ENCODE measurements at regions of chr11 and their contacts with region 1.

Region 1: GRCh38 chr11:67345920-67346799 is 7.2 kb downstream of the POLD4 start:
- DNase-seq: peak in 5 of 9 donors; percentile 34 to 62 (median 52)
- ATAC-seq: peak; percentile 76
- H3K4me3 ChIP-seq: no peak overlapping the region
- H3K4me3 Mint-ChIP-seq: peak overlapping the region; percentile 30 to 74 (median 56)
- H3K27ac ChIP-seq: peak overlapping the region; percentile 68
- H3K27ac Mint-ChIP-seq: peak overlapping the region; percentile 61 to 98 (median 92)
- H3K4me1 ChIP-seq: peaks cover 5 to 38% of the 10 kb centered on the region in 2 donors
- H3K4me1 Mint-ChIP-seq: peaks cover 27 to 70% (median 60%) of the 10 kb centered on the region in 7 donors
- H3K27me3 ChIP-seq: no peaks in the 10 kb centered on the region
- H3K27me3 Mint-ChIP-seq: no peaks in the 10 kb centered on the region

Region 2: GRCh38 chr11:67373925-67374618 is 27.9 kb after region 1 on chr11:
- CTCF ChIA-PET with region 1: interaction called, 495 read pairs
- POLR2A ChIA-PET with region 1: interaction called, 272 read pairs
- intact Hi-C with region 1: no loop called
- DNase-seq: peak in 6 of 9 donors; percentile 45 to 56 (median 50)
- ATAC-seq: peak; percentile 68
- H3K4me3 ChIP-seq: peak overlapping the region; percentile 64
- H3K4me3 Mint-ChIP-seq: peak overlapping the region; percentile 74 to 98 (median 86)
- H3K27ac ChIP-seq: peak overlapping the region; percentile 57
- H3K27ac Mint-ChIP-seq: peak overlapping the region in 7 of 9 donors; percentile 55 to 83 (median 69)
- H3K4me1 ChIP-seq: peaks cover 12 to 31% of the 10 kb centered on the region in 2 donors
- H3K4me1 Mint-ChIP-seq: peaks cover 18 to 41% (median 27%) of the 10 kb centered on the region in 7 donors
- H3K27me3 ChIP-seq: peaks cover 0 to 5% of the 10 kb centered on the region in 2 donors
- H3K27me3 Mint-ChIP-seq: peaks cover 0 to 60% (median 14%) of the 10 kb centered on the region in 5 donors

Region 3: DNA sequence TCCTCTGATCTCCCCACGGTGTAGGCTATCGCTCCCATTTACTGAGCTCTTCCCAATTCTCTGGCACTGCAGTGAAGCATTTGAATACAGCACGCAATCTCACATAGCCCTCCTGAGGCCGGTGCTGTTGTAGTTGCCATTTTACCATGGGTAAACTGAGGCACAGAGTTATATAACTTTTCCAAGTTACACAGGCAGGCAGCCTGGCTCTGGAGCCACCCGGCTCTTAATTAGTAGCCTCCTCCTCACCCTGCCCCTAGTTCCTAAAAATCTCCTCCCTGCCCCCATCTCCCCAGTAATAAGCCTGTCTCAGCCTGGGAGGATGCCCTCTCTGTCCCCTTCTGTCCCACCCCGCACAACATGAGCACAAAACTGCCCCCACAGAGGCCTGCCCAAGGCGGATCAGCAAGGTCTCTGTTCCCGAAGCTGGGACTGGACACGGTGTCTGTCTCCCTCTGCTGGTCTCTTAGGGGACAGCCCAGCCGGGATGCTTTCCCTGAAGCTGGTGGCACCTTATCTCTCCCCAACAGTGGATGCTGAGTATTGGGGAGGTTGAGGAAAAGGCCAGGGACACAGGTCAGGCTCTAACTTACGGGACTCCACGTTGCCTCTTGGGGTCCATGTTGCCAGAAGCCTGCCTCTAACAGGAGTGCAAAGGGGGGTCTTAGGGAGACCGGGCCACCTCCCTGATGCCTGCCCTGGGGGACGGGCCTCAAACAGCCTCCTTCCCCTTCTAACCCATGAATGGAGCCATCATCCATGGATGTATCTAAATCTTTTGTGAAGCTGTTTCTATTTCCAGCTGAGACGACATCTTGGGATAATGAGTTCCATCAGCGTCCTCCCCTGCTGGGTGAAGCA is 36.3 kb after region 1 on chr11:
- CTCF ChIA-PET with region 1: interaction called, 495 read pairs
- POLR2A ChIA-PET with region 1: interaction called, 272 read pairs
- intact Hi-C with region 1: loop called (anchors 1 kb)
- DNase-seq: peak; percentile 67 to 86 (median 79)
- ATAC-seq: peak; percentile 96
- H3K4me3 ChIP-seq: no peak overlapping the region
- H3K4me3 Mint-ChIP-seq: no peak overlapping the region
- H3K27ac ChIP-seq: no peak overlapping the region
- H3K27ac Mint-ChIP-seq: peak overlapping the region in 2 of 9 donors; percentile 1 to 79
- H3K4me1 ChIP-seq: peaks cover 0 to 5% of the 10 kb centered on the region in 2 donors
- H3K4me1 Mint-ChIP-seq: peaks cover 4 to 20% (median 8%) of the 10 kb centered on the region in 7 donors
- H3K27me3 ChIP-seq: no peaks in the 10 kb centered on the region
- H3K27me3 Mint-ChIP-seq: peaks cover 0 to 38% (median 0%) of the 10 kb centered on the region in 5 donors

Measured in naive thymus-derived CD4-positive, alpha-beta T cell (primary cell).